BJ (cell line): ENCODE measurements at regions of chr10 and their contacts with region 1.

Region 1: DNA sequence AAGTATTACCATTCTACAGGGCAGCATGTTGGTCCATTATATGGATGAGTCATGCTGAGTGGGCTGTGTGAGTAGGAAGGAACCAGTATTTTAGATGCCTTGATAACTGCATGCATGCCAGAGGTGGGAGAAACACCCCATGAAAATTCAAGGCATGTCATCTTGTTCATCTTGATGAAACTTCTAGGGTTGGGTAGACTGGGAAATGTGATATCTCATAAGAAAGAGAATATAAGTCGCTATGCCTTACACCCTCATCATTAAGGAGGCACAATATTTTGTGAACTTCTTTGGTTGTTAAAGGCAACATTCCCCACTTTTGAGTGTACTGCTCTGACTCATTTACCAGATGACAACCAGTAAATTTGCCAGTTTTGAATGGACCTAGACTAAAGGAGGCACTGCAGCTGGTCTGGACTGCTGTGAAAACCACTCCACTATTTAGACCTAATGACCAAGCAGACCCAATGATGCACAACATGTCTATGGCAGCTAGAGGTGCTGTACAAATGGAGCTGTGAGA is 48.0 kb downstream of the ZNF365 start:
- DNase-seq: peak; percentile 76
- H3K4me3 ChIP-seq: no peak overlapping the region
- H3K27me3 ChIP-seq: no peaks in the 10 kb centered on the region
- CTCF ChIP-seq: peak; percentile 40

Region 2: GRCh38 chr10:62264702-62265436 is 157.3 kb before region 1 on chr10:
- CTCF ChIA-PET with region 1: interaction called, 18 read pairs
- POLR2A ChIA-PET with region 1: no interaction called
- DNase-seq: peak; percentile 76
- H3K4me3 ChIP-seq: no peak overlapping the region
- H3K27me3 ChIP-seq: no peaks in the 10 kb centered on the region; the same call in 1 of the 2 replicates
- CTCF ChIP-seq: peak; percentile 62